Pancreas (tissue), 10 donors: ENCODE measurements at regions of chr6 and their contacts with region 1.

Region 1: GRCh38 chr6:47057830-47058540 is 15.9 kb upstream of the ADGRF1 start:
- DNase-seq: no peak
- ATAC-seq: no peak
- H3K4me3 ChIP-seq: no peak overlapping the region
- H3K27ac ChIP-seq: no peak overlapping the region
- H3K4me1 ChIP-seq: no peaks in the 10 kb centered on the region
- H3K27me3 ChIP-seq: no peaks in the 10 kb centered on the region
- CTCF ChIP-seq: no peak

Region 2: DNA sequence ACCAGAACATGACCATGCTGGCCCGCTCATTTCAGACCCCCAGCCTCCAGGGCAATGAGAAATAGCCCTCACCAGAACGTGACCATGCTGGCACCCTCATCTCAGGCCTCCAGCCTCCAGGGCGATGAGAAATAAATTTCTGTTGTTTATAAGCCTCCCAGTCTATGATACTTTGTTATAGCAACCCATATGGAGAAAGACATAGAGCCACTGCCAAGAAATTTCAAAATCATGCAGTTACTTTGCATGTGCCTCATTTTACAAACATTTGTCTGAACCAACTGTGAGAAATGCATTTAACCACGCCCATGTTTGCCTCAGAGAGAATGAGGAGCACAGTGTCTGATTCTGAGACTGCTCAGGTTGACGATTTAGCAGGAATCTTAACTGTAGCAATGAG is 420.8 kb before region 1 on chr6:
- intact Hi-C with region 1: no loop called
- DNase-seq: no peak
- ATAC-seq: peak in 1 of 4 donors; percentile 61
- H3K4me3 ChIP-seq: no peak overlapping the region
- H3K27ac ChIP-seq: no peak overlapping the region
- H3K4me1 ChIP-seq: no peaks in the 10 kb centered on the region
- H3K27me3 ChIP-seq: no peaks in the 10 kb centered on the region
- CTCF ChIP-seq: no peak

Region 3: DNA sequence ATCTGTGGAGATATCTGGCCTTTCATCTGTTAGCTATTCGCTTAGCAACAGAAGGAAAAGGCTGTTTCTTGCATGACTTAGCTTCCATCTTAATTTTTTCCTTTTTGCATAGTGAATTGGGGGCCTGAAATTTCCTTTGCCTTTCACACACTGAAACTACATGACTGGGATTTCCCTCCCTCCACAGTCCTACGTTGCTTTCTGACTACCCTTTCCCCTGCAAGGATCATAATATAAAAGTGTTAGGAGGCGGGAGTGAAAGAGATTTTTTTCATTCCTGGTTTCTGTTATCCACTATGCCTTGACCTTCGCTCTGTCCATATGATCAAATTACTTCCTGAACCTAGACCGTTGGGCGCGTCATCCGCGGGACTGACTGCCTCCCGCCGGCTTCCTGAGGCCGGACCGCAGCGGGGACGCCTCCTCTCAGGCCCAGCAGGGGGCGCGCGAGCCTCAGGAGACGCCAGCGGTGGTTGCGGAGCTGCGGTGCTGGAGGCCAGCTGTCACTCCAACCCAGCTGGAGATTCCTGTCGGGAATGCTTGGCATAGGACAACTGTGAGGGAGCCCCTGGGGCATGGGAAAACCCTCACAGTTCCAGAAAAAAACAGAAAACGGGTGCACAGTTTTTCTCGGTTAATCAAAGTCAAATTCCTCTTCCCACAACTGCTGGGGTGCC is 209.2 kb before region 1 on chr6:
- intact Hi-C with region 1: loop called in 1 of 3 experiments (anchors 10 kb)
- DNase-seq: peak; percentile 76 to 97 (median 89)
- ATAC-seq: peak; percentile 98 to 100 (median 98)
- H3K4me3 ChIP-seq: no peak overlapping the region
- H3K27ac ChIP-seq: no peak overlapping the region
- H3K4me1 ChIP-seq: peaks cover 0 to 3% (median 0%) of the 10 kb centered on the region in 3 donors
- H3K27me3 ChIP-seq: no peaks in the 10 kb centered on the region
- CTCF ChIP-seq: peak; percentile 93 to 97 (median 95)

Region 4: GRCh38 chr6:46914279-46914810 is 143.6 kb before region 1 on chr6:
- intact Hi-C with region 1: no loop called
- DNase-seq: no peak
- ATAC-seq: peak in 1 of 4 donors; percentile 38
- H3K4me3 ChIP-seq: no peak overlapping the region
- H3K27ac ChIP-seq: no peak overlapping the region
- H3K4me1 ChIP-seq: peaks cover 0 to 4% (median 0%) of the 10 kb centered on the region in 3 donors
- H3K27me3 ChIP-seq: no peaks in the 10 kb centered on the region
- CTCF ChIP-seq: no peak

Region 5: DNA sequence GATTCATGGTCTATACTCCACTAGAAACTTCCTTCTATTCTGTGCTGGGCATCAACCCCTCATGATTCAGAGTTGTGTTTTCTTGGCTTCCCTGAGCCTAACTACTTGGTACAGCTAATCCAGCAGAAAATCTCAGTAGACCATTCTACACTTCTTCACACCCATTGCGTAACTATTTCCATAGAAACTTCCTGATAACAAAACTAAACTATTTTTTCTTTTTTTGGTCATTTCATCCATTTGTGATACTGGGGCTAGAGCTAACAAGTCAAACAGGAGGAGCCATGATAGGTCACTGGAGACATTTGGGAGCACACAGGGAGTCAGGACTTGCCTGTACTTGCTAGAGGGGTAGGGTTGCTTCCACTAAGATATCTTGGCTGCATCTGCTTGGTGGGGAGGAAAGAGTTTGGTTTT is 111.8 kb after region 1 on chr6:
- intact Hi-C with region 1: no loop called
- DNase-seq: no peak
- ATAC-seq: peak in 2 of 4 donors; percentile 44 to 71
- H3K4me3 ChIP-seq: no peak overlapping the region
- H3K27ac ChIP-seq: no peak overlapping the region
- H3K4me1 ChIP-seq: no peaks in the 10 kb centered on the region
- H3K27me3 ChIP-seq: no peaks in the 10 kb centered on the region
- CTCF ChIP-seq: no peak

Region 6: GRCh38 chr6:47376930-47377329 is 318.9 kb after region 1 on chr6:
- intact Hi-C with region 1: no loop called
- DNase-seq: no peak
- ATAC-seq: no peak
- H3K4me3 ChIP-seq: no peak overlapping the region
- H3K27ac ChIP-seq: no peak overlapping the region
- H3K4me1 ChIP-seq: no peaks in the 10 kb centered on the region
- H3K27me3 ChIP-seq: no peaks in the 10 kb centered on the region
- CTCF ChIP-seq: no peak